Activated CD4-positive, alpha-beta T cell treated with anti-CD3 and anti-CD28 coated beads, Interleukin-2, amount 10 ng/mL, durations not matched to agents 24 days and 14 days (primary cell): ENCODE measurements at regions of chr7 and their contacts with region 1.

Region 1: DNA sequence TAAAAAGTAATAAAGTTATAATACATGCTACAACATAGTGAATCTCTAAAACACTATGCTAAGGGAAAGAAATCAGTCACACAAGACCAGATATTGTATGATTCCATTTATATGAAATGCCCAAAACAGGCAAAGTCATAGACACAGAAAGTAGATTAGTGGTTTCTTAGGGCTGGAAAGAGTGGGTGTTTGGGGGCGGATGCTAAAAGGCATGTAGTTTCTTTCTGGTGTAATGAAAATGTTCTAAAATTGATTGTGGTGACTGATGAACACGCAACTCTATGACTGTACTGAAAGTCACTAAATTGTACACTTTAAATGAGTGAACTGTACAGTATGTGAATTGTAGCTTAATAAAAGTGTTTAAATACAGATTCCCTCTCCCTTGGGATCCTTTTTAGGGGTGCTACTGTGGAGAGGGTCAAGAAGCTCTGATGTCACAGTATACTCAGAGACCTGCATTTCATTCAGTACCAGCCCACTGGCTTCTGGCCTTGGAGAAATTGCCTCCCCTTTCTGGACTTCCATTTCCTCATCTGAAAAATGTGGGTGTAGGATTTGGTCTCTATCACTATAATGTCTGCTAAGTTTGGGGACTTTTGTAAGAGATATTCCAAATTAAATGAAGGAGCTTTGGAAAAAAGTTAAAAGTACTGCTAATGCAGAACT is 46.4 kb downstream of the AOAH start:
- DNase-seq: peak; percentile 78
- H3K4me3 Mint-ChIP-seq: peak overlapping the region; percentile 69
- H3K27ac Mint-ChIP-seq: peak overlapping the region; percentile 93
- H3K4me1 Mint-ChIP-seq: peaks cover 45% of the 10 kb centered on the region
- H3K27me3 Mint-ChIP-seq: no peaks in the 10 kb centered on the region

Region 2: GRCh38 chr7:36707465-36707864 is 29.6 kb after region 1 on chr7:
- intact Hi-C with region 1: loop called (anchors 2 kb)
- DNase-seq: no peak
- H3K4me3 Mint-ChIP-seq: peak overlapping the region; percentile 42
- H3K27ac Mint-ChIP-seq: peak overlapping the region; percentile 85
- H3K4me1 Mint-ChIP-seq: peaks cover 64% of the 10 kb centered on the region
- H3K27me3 Mint-ChIP-seq: no peaks in the 10 kb centered on the region

Region 3: GRCh38 chr7:36784991-36785940 is 107.4 kb after region 1 on chr7:
- intact Hi-C with region 1: loop called (anchors 1 kb)
- DNase-seq: peak; percentile 88
- H3K4me3 Mint-ChIP-seq: peak overlapping the region; percentile 68
- H3K27ac Mint-ChIP-seq: peak overlapping the region; percentile 88
- H3K4me1 Mint-ChIP-seq: peaks cover 72% of the 10 kb centered on the region
- H3K27me3 Mint-ChIP-seq: no peaks in the 10 kb centered on the region

Region 4: GRCh38 chr7:36962367-36962766 is 284.5 kb after region 1 on chr7:
- intact Hi-C with region 1: loop called (anchors 5 kb)
- DNase-seq: no peak
- H3K4me3 Mint-ChIP-seq: no peak overlapping the region
- H3K27ac Mint-ChIP-seq: peak overlapping the region; percentile 64
- H3K4me1 Mint-ChIP-seq: peaks cover 37% of the 10 kb centered on the region
- H3K27me3 Mint-ChIP-seq: no peaks in the 10 kb centered on the region

Region 5: DNA sequence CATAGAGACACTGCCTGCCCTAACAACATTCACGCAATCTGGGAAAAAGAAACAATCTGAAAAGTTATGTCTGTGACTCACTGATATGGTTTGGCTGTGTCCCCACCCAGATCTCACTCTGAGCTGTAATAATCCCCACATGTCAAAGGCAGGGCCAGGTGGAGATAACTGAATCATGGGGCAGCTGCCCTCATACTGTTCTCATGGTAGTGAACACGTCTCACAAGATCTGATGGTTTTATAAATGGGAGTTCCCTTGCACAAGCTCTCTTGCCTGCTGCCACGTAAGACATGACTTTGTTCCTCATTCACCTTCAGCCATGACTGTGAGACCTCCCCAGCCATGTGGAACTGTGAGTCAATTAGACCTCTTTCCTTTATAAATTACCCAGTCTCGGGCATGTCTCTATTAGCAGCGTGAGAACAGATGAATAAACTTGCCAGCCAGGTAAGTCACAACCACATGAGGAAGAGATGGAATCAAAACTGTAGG is 387.9 kb after region 1 on chr7:
- intact Hi-C with region 1: loop called (anchors 5 kb)
- DNase-seq: no peak
- H3K4me3 Mint-ChIP-seq: peak overlapping the region; percentile 8
- H3K27ac Mint-ChIP-seq: peak overlapping the region; percentile 90
- H3K4me1 Mint-ChIP-seq: peaks cover 42% of the 10 kb centered on the region
- H3K27me3 Mint-ChIP-seq: no peaks in the 10 kb centered on the region

Region 6: GRCh38 chr7:37342688-37343471 is 665.0 kb after region 1 on chr7:
- intact Hi-C with region 1: loop called (anchors 5 kb)
- DNase-seq: peak; percentile 89
- H3K4me3 Mint-ChIP-seq: peak overlapping the region; percentile 92
- H3K27ac Mint-ChIP-seq: peak overlapping the region; percentile 99
- H3K4me1 Mint-ChIP-seq: peaks cover 61% of the 10 kb centered on the region
- H3K27me3 Mint-ChIP-seq: no peaks in the 10 kb centered on the region